Transverse colon (tissue), 4 donors: ENCODE measurements at regions of chr5 and their contacts with region 1.

Region 1: DNA sequence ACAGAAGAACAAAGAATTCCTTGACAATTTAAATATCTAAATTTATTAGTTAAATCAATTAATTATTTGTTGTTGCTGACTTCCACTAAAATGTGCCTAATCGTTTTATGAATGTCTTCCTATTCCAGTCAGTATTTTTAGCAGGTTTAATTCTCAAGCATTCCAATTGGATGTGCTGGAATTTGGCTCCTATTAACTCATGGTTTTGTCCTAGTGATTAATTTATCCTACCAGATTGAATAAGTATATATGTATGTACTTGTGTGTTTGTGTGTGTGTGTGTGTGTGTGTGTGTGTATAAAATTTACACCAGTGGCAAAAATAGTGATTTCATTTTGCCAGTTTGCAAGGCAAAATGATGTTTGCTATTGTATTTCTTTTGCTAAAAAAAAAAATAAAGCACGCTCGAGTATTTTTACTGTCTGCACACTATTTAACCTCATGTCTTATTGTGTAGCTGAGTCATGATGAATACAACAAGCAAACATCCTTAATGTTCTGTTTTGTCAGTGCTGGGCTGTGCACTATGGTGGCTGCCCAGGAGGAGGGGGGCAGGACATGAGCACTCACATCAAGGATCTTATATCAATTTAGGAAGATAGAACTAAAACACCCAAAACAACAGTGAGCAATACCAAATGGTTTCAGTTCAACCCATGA is 375.5 kb downstream of the PDE4D start:
- DNase-seq: no peak
- H3K4me3 ChIP-seq: no peak overlapping the region
- H3K27ac ChIP-seq: no peak overlapping the region
- H3K4me1 ChIP-seq: peaks cover 0 to 6% (median 0%) of the 10 kb centered on the region in 4 donors
- H3K27me3 ChIP-seq: no peaks in the 10 kb centered on the region
- CTCF ChIP-seq: no peak
- EP300 ChIP-seq: no peak
- POLR2A ChIP-seq: no peak

Region 2: GRCh38 chr5:59660737-59661136 is 142.7 kb after region 1 on chr5:
- in situ Hi-C with region 1: loop called in 2 of 4 experiments (anchors 10 to 25 kb)
- intact Hi-C with region 1: no loop called
- DNase-seq: no peak
- H3K4me3 ChIP-seq: no peak overlapping the region
- H3K27ac ChIP-seq: no peak overlapping the region
- H3K4me1 ChIP-seq: peaks cover 6 to 43% (median 16%) of the 10 kb centered on the region in 4 donors
- H3K27me3 ChIP-seq: no peaks in the 10 kb centered on the region
- CTCF ChIP-seq: peak in 4 of 5 experiments; percentile 13 to 32 (median 26)
- EP300 ChIP-seq: no peak
- POLR2A ChIP-seq: no peak

Region 3: GRCh38 chr5:59768152-59769040 is 250.3 kb after region 1 on chr5:
- in situ Hi-C with region 1: no loop called
- intact Hi-C with region 1: no loop called
- DNase-seq: peak; percentile 72
- H3K4me3 ChIP-seq: peak overlapping the region; percentile 45 to 59 (median 54)
- H3K27ac ChIP-seq: peak overlapping the region; percentile 79 to 88 (median 84)
- H3K4me1 ChIP-seq: peaks cover 0 to 17% (median 4%) of the 10 kb centered on the region in 4 donors
- H3K27me3 ChIP-seq: no peaks in the 10 kb centered on the region
- CTCF ChIP-seq: no peak
- EP300 ChIP-seq: no peak
- POLR2A ChIP-seq: peak; percentile 26